Left cardiac atrium (tissue), 4 donors: ENCODE measurements at regions of chr7 and their contacts with region 1.

Region 1: DNA sequence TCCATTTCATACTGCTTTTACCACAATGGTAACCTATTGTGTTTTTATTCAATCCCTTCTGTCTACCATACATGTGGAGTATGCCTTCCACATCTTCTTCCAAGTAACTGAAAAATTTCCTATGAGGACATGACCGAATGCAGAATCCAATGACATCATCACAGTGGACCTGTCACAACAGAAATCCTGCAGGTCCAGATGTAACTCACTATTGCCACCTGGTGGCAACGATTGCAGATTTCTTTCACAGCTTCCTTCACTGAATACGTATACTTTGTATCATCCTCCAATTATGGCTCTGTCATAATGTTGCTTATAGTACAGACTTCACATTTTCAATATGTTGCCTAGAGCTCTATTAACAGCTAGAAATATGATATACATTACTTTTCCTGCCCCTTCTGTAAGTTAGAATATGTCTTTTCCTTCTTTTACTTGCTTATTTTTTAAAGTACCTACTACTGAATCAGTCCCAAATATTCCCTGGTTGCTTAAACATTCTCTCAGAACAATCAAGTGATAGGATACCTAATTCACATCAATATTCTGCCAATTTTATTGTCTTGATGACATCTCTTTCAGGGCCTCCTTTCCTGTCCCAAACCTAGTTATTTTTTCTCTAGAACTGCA is 45.4 kb downstream of the SLC13A1 start:
- DNase-seq: peak; percentile 64
- ATAC-seq: peak; percentile 65 to 79

Region 2: GRCh38 chr7:122219253-122219865 is 935.0 kb before region 1 on chr7:
- intact Hi-C with region 1: loop called in 1 of 2 experiments (anchors 5 kb)
- DNase-seq: no peak
- ATAC-seq: no peak

Region 3: GRCh38 chr7:122803323-122803722 is 351.0 kb before region 1 on chr7:
- intact Hi-C with region 1: loop called in 1 of 2 experiments (anchors 5 kb)
- DNase-seq: no peak
- ATAC-seq: peak in 1 of 2 donors; percentile 34

Region 4: DNA sequence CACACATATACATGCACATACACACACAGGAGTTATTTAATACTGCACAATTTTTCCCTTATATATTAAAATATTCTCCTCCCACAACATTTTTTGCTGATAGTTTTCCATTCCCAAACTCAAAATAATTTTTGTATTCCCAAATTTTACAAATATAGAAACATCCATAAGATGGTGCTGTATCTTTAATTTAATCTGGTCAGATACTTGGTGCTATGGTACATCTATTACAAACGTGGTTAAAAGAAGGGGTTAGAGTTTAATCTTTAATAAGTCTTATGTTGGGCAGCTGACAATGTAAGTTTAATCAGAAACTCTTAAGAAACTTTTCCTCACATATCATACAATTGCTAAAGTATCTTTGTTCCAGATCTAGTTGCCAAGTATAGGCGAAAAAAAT is 257.8 kb before region 1 on chr7:
- intact Hi-C with region 1: loop called in 1 of 2 experiments (anchors 5 kb)
- DNase-seq: no peak
- ATAC-seq: no peak

Region 5: DNA sequence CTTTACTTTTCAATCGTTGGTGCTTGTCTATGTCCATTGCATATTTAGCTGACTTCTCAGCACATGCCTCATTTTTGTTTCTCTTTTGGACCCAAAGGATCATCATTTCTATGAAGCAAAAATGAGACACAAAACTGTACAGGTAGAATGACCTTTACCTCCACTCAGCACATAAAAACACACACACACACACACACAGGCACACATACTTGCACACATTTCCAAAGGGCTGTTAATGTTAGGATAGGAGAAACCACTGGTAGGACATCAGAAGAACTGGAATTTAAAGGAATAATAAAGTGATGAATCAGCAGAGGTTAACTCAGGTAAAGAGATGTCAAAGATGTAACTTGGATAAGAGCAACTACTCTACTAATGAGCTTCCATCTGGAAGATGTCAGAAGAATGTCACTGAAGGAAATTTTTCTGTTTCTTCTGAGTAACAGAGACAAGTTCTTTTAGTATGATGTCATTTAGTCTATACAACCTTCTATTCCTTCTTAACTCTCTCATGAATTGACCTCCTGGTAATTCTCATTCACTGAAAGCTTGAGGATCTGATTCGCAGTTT is 1637.6 kb after region 1 on chr7:
- intact Hi-C with region 1: no loop called
- DNase-seq: no peak
- ATAC-seq: no peak